ENCODE measurements at regions of chr17 and their contacts with region 1.

Region 1: GRCh38 chr17:56098746-56099145 is 54.5 kb upstream of the ANKFN1 start:
- DNase-seq: no peak
- ATAC-seq: no peak
- H3K4me3 ChIP-seq: no peak overlapping the region
- H3K4me3 Mint-ChIP-seq: no peak overlapping the region
- H3K27ac ChIP-seq: no peak overlapping the region
- H3K27ac Mint-ChIP-seq: no peak overlapping the region
- H3K4me1 ChIP-seq: no peaks in the 10 kb centered on the region
- H3K4me1 Mint-ChIP-seq: no peaks in the 10 kb centered on the region
- H3K27me3 ChIP-seq: no peaks in the 10 kb centered on the region
- H3K27me3 Mint-ChIP-seq: no peaks in the 10 kb centered on the region
- CTCF ChIP-seq: no peak

Region 2: GRCh38 chr17:56076980-56077379 is 21.8 kb before region 1 on chr17:
- CTCF ChIA-PET with region 1: no interaction called
- POLR2A ChIA-PET with region 1: no interaction called
- intact Hi-C with region 1: loop called in 1 of 2 experiments (anchors 1 kb)
- DNase-seq: no peak
- ATAC-seq: no peak
- H3K4me3 ChIP-seq: no peak overlapping the region
- H3K4me3 Mint-ChIP-seq: no peak overlapping the region
- H3K27ac ChIP-seq: no peak overlapping the region
- H3K27ac Mint-ChIP-seq: no peak overlapping the region
- H3K4me1 ChIP-seq: no peaks in the 10 kb centered on the region
- H3K4me1 Mint-ChIP-seq: no peaks in the 10 kb centered on the region
- H3K27me3 ChIP-seq: no peaks in the 10 kb centered on the region
- H3K27me3 Mint-ChIP-seq: peaks cover 1% of the 10 kb centered on the region
- CTCF ChIP-seq: no peak

Measured in CD8-positive, alpha-beta T cell (primary cell).